ENCODE measurements at regions of chr5 and their contacts with region 1.

Region 1: GRCh38 chr5:102792705-102793104 is 37.6 kb downstream of the PAM start:
- DNase-seq: no peak
- H3K4me3 ChIP-seq: no peak overlapping the region
- H3K27ac ChIP-seq: no peak overlapping the region
- H3K4me1 ChIP-seq: peaks cover 0 to 38% (median 2%) of the 10 kb centered on the region in 4 donors
- H3K27me3 ChIP-seq: no peaks in the 10 kb centered on the region
- CTCF ChIP-seq: no peak
- EP300 ChIP-seq: no peak
- POLR2A ChIP-seq: no peak

Region 2: DNA sequence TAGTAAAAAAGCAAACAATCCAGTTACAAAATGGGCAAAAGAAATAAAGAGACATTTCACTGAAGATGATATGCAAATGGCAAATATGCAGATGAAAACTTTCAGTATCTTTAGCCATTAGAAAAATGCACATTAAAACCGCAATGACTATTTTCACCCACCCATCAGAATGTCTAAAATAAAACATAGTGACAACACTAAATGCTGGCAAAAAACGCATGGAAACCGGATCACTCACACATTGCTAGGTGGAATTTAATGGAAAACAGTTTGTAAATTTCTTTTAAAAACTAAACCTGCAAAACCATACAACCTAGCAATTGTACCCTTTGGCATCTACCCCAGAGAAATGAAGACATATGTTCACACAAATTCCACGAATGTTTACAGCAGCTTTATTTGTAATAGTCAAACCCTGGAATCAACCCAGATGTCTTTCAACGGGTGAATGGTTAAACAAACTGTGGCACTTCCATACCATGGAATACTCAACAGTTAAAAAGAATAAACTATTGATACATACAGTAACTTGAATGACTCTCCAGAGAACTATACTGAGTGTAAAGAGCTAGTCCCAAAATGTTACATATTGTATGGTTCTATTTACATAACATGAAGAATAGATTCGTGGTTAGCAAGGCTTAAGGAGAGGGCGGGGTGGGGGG is 54.8 kb before region 1 on chr5:
- in situ Hi-C with region 1: no loop called
- intact Hi-C with region 1: no loop called
- DNase-seq: no peak
- H3K4me3 ChIP-seq: no peak overlapping the region
- H3K27ac ChIP-seq: no peak overlapping the region
- H3K4me1 ChIP-seq: no peaks in the 10 kb centered on the region
- H3K27me3 ChIP-seq: no peaks in the 10 kb centered on the region
- CTCF ChIP-seq: no peak
- EP300 ChIP-seq: no peak
- POLR2A ChIP-seq: no peak

Region 3: DNA sequence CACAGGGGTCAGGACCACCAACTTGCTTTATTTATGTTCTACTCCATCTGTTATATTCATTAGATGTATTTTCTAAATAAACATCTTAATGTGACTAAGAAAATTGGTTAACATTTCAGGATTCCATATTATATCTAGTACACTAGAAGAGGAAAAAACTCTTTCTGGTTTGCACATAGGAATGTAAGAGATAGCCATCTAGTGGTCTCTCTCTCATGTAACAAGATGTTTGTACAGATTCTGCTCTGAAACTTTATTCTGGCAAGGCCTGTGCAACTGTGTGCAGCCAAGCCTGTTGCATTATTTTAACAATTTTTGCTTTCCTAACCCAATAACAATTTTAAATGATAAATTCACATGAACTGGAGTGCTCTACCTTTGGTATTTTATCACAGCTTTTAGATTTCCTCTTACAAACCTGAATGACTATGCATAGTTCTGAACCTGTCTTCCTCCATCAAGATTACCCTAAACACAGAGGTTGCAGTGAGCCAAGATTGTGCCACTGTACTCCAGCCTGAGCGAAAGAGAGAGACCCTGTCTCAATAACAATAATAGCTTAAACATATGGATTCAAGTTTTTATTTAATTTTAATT is 179.1 kb after region 1 on chr5:
- in situ Hi-C with region 1: loop called in 1 of 4 experiments (anchors 25 kb)
- intact Hi-C with region 1: no loop called
- DNase-seq: no peak
- H3K4me3 ChIP-seq: no peak overlapping the region
- H3K27ac ChIP-seq: no peak overlapping the region
- H3K4me1 ChIP-seq: no peaks in the 10 kb centered on the region
- H3K27me3 ChIP-seq: no peaks in the 10 kb centered on the region
- CTCF ChIP-seq: peak; percentile 28 to 44 (median 37)
- EP300 ChIP-seq: no peak
- POLR2A ChIP-seq: no peak

Measured in transverse colon (tissue), 4 donors.